Calu3 (cell line): ENCODE measurements at regions of chr12 and their contacts with region 1.

Region 1: DNA sequence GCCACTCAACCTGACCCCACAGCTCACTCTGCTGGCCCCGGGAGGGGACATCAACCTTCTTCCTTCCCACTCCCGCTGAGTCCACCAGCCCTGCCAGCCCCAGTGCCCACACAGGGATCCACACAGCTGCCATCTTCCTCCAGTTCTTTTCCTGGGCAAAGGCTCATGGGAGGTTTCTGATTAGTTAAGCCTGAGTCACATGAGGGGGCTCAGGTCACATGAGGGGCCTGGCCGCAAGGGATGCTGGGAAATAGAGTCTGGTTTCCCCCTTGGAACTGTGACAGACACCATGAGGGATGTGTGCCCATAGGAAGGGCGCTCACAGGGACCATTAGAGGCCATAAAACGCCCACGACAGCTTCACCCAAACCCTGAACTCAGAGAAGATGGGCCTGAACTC is 228.7 kb upstream of the SFSWAP start:
- DNase-seq: no peak
- H3K4me3 Mint-ChIP-seq: no peak overlapping the region
- H3K27ac Mint-ChIP-seq: no peak overlapping the region
- H3K4me1 Mint-ChIP-seq: no peaks in the 10 kb centered on the region
- H3K27me3 Mint-ChIP-seq: peaks cover 68% of the 10 kb centered on the region
- CTCF ChIP-seq: no peak

Region 2: GRCh38 chr12:131555197-131555846 is 73.1 kb after region 1 on chr12:
- CTCF ChIA-PET with region 1: no interaction called
- intact Hi-C with region 1: no loop called
- DNase-seq: no peak
- H3K4me3 Mint-ChIP-seq: no peak overlapping the region
- H3K27ac Mint-ChIP-seq: no peak overlapping the region
- H3K4me1 Mint-ChIP-seq: no peaks in the 10 kb centered on the region
- H3K27me3 Mint-ChIP-seq: peaks cover 80% of the 10 kb centered on the region
- CTCF ChIP-seq: no peak

Region 3: DNA sequence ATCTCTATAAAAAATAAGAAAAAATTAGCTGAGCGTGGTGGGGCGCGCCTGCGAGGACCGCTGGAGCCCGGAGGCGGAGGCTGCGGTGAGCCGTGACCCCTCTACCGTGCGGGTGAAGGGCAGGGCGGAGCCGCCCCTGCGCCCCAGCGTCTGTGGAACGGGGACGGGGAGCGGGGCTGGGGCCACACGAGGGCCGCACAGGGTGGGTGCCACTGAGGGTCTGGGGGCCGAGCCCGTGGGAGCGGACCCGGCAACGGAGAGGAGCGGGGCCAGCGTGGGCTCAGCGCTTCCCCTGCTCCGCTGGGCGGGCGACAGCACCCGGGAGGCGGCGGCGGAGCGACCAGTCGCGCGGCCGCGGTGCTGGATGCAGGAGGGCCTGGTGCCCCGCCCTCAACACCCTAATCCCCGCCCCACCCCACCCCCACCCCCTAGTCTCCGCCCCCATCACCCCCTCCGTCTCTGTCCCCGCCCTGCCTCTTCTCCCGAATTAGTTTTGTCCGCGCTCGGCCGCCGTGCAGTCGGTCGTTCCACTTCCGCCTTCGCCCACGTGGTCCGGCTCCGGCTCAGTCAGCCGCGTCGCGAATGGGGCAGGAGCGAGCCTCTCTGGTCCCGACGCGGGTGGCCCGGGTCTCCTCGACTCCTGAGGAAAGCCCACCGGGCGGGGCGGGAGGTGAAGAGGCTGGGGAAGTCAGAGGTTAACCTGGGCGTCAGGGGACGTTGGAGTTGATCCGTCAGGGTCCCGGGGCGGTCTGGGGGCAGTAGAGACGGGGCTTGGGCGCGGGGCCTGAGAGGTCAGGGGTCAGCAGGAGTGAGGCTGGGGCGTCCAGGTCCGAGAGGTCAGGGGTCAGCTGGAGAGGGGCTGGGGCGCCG is 446.7 kb after region 1 on chr12 and contains the start of gene PUS1:
- CTCF ChIA-PET with region 1: interaction called, 17 read pairs
- intact Hi-C with region 1: no loop called
- DNase-seq: peak; percentile 98
- H3K4me3 Mint-ChIP-seq: peak within 1 kb of the TSS; percentile 100
- H3K27ac Mint-ChIP-seq: peak within 1 kb of the TSS; percentile 97
- H3K4me1 Mint-ChIP-seq: no peaks in the 10 kb centered on the region
- H3K27me3 Mint-ChIP-seq: no peaks in the 10 kb centered on the region
- CTCF ChIP-seq: no peak
- total RNA-seq, gene PUS1: 81.3 and 95.5 TPM in 2 replicates